B cell (primary cell): ENCODE measurements at regions of chr11 and their contacts with region 1.

Region 1: DNA sequence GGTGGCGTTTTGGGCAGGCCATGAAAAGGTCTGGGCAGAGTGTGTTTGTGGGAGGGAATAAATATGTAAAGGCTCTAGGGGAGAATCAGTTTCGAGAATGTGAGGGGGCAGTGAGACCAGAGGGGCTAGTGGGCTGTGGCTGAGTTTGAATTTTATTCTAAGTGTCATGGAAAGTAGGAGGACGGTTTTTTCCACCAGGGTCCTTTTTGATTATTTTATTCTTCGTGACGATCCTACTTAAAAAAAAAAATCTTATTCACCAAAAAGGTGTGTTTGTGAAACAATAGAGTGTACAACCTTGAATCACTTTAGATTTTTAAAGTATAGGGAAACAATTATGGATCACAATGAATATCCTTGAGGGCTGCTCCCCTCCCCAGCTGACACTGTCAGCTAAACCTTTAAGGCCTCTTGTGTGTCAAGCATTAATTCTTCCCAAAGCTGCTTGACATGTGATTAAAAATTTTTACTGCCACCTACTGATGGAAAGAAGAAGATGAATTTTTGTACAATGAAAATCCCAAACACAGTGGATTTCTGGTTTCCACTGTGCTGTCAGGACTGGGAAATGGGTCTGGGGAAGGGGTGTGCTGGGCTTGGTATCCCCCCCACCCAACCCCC is 107.5 kb upstream of the OR4B1 start:
- DNase-seq: no peak
- ATAC-seq: peak; percentile 12
- H3K4me3 ChIP-seq: peak overlapping the region; percentile 5 to 68 (median 39)
- H3K4me3 Mint-ChIP-seq: peak overlapping the region; percentile 74
- H3K27ac ChIP-seq: peak overlapping the region; percentile 54 to 80
- H3K27ac Mint-ChIP-seq: peak overlapping the region; percentile 70
- H3K4me1 ChIP-seq: peaks cover 69 to 78% of the 10 kb centered on the region in 2 donors
- H3K4me1 Mint-ChIP-seq: peaks cover 70% of the 10 kb centered on the region
- H3K27me3 ChIP-seq: no peaks in the 10 kb centered on the region
- H3K27me3 Mint-ChIP-seq: no peaks in the 10 kb centered on the region
- CTCF ChIP-seq: no peak

Region 2: DNA sequence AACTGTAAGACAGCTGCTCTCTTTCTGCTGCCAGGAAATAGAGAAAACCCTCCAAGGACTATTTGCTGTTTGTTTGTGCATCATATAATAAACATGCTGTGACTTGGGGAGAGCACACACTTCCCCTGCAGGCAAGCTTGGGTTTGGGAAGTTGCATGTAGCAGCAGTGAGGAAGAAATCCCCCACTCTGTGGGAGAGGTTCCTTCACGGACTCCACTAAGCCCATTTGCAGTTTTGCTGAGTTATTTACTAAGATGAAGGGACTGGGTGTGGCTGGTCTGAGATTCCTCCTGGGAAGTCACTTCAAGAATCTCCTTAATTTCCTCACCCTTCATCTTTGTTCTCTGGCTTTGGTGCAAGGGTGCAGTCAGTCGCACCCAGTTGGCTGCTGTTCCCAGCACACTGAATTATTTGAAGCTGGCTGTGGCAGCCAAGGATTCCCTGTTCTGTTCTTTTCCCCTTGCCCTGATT is 1037.3 kb before region 1 on chr11:
- CTCF ChIA-PET with region 1: no interaction called
- POLR2A ChIA-PET with region 1: no interaction called
- intact Hi-C with region 1: no loop called
- DNase-seq: no peak
- ATAC-seq: no peak
- H3K4me3 ChIP-seq: no peak overlapping the region
- H3K4me3 Mint-ChIP-seq: no peak overlapping the region
- H3K27ac ChIP-seq: no peak overlapping the region
- H3K27ac Mint-ChIP-seq: no peak overlapping the region
- H3K4me1 ChIP-seq: no peaks in the 10 kb centered on the region
- H3K4me1 Mint-ChIP-seq: no peaks in the 10 kb centered on the region
- H3K27me3 ChIP-seq: no peaks in the 10 kb centered on the region
- H3K27me3 Mint-ChIP-seq: no peaks in the 10 kb centered on the region
- CTCF ChIP-seq: no peak

Region 3: GRCh38 chr11:47766305-47767227 is 342.6 kb before region 1 on chr11:
- CTCF ChIA-PET with region 1: interaction called, 3 read pairs
- POLR2A ChIA-PET with region 1: interaction called, 5 read pairs
- intact Hi-C with region 1: loop called (anchors 1 kb)
- DNase-seq: peak; percentile 88
- ATAC-seq: peak; percentile 15
- H3K4me3 ChIP-seq: peak overlapping the region; percentile 49 to 88 (median 78)
- H3K4me3 Mint-ChIP-seq: peak overlapping the region; percentile 97
- H3K27ac ChIP-seq: peak overlapping the region; percentile 91 to 97
- H3K27ac Mint-ChIP-seq: peak overlapping the region; percentile 100
- H3K4me1 ChIP-seq: peaks cover 19 to 24% of the 10 kb centered on the region in 2 donors
- H3K4me1 Mint-ChIP-seq: peaks cover 26% of the 10 kb centered on the region
- H3K27me3 ChIP-seq: no peaks in the 10 kb centered on the region
- H3K27me3 Mint-ChIP-seq: no peaks in the 10 kb centered on the region
- CTCF ChIP-seq: no peak

Region 4: DNA sequence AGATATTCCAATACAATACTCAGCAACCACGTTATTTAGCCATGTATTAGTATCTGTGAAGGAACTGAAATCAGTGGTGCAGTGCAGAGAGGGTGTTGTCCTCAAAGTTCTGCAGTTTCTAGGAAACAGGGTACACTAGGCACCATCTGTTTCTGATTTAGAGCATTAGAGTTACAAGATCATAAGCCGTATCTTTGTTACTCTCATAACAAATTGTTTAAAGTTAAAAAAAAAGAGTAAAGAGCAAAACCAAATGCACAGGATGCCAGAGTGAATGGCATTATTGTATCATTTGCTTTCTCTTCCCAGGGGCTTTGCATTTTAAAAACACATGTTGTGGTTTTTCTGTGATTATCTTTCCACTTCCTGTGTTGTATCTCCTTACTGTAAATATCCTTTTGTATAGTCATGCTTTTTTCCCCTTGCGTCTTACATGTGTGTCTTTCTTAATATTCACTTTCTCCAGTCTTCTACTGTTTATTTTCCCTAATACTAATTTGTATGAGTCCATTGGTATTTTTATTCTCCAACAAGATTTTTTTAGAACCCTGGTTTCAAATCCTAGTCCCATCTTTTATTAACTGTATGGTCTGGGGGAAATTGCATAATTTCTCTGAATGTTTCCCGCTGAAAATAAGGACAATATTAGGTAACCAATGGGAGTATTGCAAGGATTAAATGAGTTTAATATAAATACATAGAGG is 245.8 kb before region 1 on chr11:
- CTCF ChIA-PET with region 1: interaction called, 89 read pairs
- POLR2A ChIA-PET with region 1: interaction called, 3 read pairs
- intact Hi-C with region 1: no loop called
- DNase-seq: peak; percentile 82
- ATAC-seq: peak; percentile 81
- H3K4me3 ChIP-seq: peak overlapping the region in 1 of 5 experiments; percentile 52
- H3K4me3 Mint-ChIP-seq: peak overlapping the region; percentile 46
- H3K27ac ChIP-seq: peak overlapping the region; percentile 77 to 78
- H3K27ac Mint-ChIP-seq: peak overlapping the region; percentile 85
- H3K4me1 ChIP-seq: peaks cover 72 to 81% of the 10 kb centered on the region in 2 donors
- H3K4me1 Mint-ChIP-seq: peaks cover 63% of the 10 kb centered on the region
- H3K27me3 ChIP-seq: no peaks in the 10 kb centered on the region
- H3K27me3 Mint-ChIP-seq: no peaks in the 10 kb centered on the region
- CTCF ChIP-seq: no peak

Region 5: DNA sequence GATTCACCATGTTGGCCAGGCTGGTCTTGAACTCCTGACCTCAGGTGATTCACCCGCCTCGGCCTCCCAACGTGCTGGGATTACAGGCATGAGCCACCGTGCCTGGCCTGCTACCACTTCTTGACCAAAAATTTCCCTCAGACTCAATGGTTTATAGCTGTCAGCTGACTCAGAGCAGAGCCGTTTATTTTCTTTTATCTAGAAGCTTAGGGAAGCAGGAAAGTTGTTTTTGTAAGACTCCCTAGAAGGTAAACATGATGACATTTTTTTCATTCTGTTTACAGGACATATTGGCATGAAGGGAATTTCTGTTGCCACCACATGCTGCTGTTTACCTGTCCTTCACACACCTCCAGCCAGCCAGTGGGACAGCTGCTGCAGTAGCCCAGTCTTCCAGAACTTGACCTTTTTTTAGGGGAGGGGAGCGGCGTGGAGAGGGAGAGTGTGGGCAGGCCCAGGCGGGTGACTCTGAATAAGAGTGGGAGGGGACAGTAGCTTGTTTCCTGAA is 184.9 kb before region 1 on chr11:
- CTCF ChIA-PET with region 1: interaction called, 12 read pairs
- POLR2A ChIA-PET with region 1: interaction called, 4 read pairs
- intact Hi-C with region 1: no loop called
- DNase-seq: no peak
- ATAC-seq: no peak
- H3K4me3 ChIP-seq: no peak overlapping the region
- H3K4me3 Mint-ChIP-seq: no peak overlapping the region
- H3K27ac ChIP-seq: no peak overlapping the region
- H3K27ac Mint-ChIP-seq: peak overlapping the region; percentile 79
- H3K4me1 ChIP-seq: peaks cover 61 to 81% of the 10 kb centered on the region in 2 donors
- H3K4me1 Mint-ChIP-seq: peaks cover 67% of the 10 kb centered on the region
- H3K27me3 ChIP-seq: no peaks in the 10 kb centered on the region
- H3K27me3 Mint-ChIP-seq: no peaks in the 10 kb centered on the region
- CTCF ChIP-seq: no peak

Region 6: GRCh38 chr11:47980245-47981049 is 128.7 kb before region 1 on chr11 and contains the start of gene PTPRJ:
- CTCF ChIA-PET with region 1: interaction called, 18 read pairs
- POLR2A ChIA-PET with region 1: interaction called, 7 read pairs
- intact Hi-C with region 1: loop called (anchors 1 kb)
- DNase-seq: peak; percentile 80
- ATAC-seq: peak; percentile 68
- H3K4me3 ChIP-seq: peak within 1 kb of the TSS; percentile 56 to 82 (median 78)
- H3K4me3 Mint-ChIP-seq: peak within 1 kb of the TSS; percentile 94
- H3K27ac ChIP-seq: peak within 1 kb of the TSS in 1 of 2 donors; percentile 64
- H3K27ac Mint-ChIP-seq: peak within 1 kb of the TSS; percentile 64
- H3K4me1 ChIP-seq: peaks cover 27 to 37% of the 10 kb centered on the region in 2 donors
- H3K4me1 Mint-ChIP-seq: peaks cover 36% of the 10 kb centered on the region
- H3K27me3 ChIP-seq: no peaks in the 10 kb centered on the region
- H3K27me3 Mint-ChIP-seq: no peaks in the 10 kb centered on the region
- CTCF ChIP-seq: no peak
- total RNA-seq, gene PTPRJ: 20.0 and 20.3 TPM in 2 replicates

Region 7: GRCh38 chr11:48028914-48029680 is 80.1 kb before region 1 on chr11:
- CTCF ChIA-PET with region 1: interaction called, 10 read pairs
- POLR2A ChIA-PET with region 1: no interaction called
- intact Hi-C with region 1: no loop called
- DNase-seq: no peak
- ATAC-seq: no peak
- H3K4me3 ChIP-seq: no peak overlapping the region
- H3K4me3 Mint-ChIP-seq: no peak overlapping the region
- H3K27ac ChIP-seq: no peak overlapping the region
- H3K27ac Mint-ChIP-seq: peak overlapping the region; percentile 78
- H3K4me1 ChIP-seq: peaks cover 25 to 44% of the 10 kb centered on the region in 2 donors
- H3K4me1 Mint-ChIP-seq: peaks cover 59% of the 10 kb centered on the region
- H3K27me3 ChIP-seq: no peaks in the 10 kb centered on the region
- H3K27me3 Mint-ChIP-seq: no peaks in the 10 kb centered on the region
- CTCF ChIP-seq: no peak

Region 8: DNA sequence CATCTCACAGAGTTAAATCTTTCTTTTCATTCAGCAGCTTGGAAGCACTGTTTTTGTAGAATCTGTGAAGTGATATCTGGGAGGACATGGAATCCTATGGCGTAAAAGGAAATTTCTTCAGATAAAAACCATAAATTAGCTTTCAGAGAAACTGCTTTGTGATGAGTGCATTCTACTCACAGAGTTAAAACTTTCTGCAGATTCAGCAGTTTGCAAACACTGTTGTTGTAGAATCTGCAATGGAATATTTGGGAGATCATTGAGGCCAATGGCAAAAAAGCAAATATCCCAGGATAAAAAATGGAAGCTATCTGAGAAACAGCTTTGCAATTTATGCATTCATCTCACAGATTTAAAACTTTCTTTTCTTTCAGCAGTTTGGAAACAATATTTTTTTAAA is 560.0 kb after region 1 on chr11:
- CTCF ChIA-PET with region 1: no interaction called
- POLR2A ChIA-PET with region 1: no interaction called
- intact Hi-C with region 1: no loop called
- DNase-seq: no peak
- ATAC-seq: no peak
- H3K4me3 ChIP-seq: no peak overlapping the region
- H3K4me3 Mint-ChIP-seq: no peak overlapping the region
- H3K27ac ChIP-seq: no peak overlapping the region
- H3K27ac Mint-ChIP-seq: no peak overlapping the region
- H3K4me1 ChIP-seq: no peaks in the 10 kb centered on the region
- H3K4me1 Mint-ChIP-seq: no peaks in the 10 kb centered on the region
- H3K27me3 ChIP-seq: no peaks in the 10 kb centered on the region
- H3K27me3 Mint-ChIP-seq: no peaks in the 10 kb centered on the region
- CTCF ChIP-seq: no peak